Caco-2 (cell line): ENCODE measurements at regions of chr12 and their contacts with region 1.

Region 1: GRCh38 chr12:50074936-50075807 is 10.0 kb upstream of the SMARCD1 start:
- DNase-seq: peak; percentile 91 to 95
- H3K4me3 ChIP-seq: no peak overlapping the region
- H3K4me3 Mint-ChIP-seq: peak overlapping the region; percentile 36
- H3K27ac Mint-ChIP-seq: peak overlapping the region; percentile 66
- H3K4me1 ChIP-seq: peaks cover 20% of the 10 kb centered on the region
- H3K4me1 Mint-ChIP-seq: peaks cover 21% of the 10 kb centered on the region
- H3K27me3 ChIP-seq: no peaks in the 10 kb centered on the region
- H3K27me3 Mint-ChIP-seq: no peaks in the 10 kb centered on the region
- CTCF ChIP-seq: peak; percentile 95 to 97

Region 2: DNA sequence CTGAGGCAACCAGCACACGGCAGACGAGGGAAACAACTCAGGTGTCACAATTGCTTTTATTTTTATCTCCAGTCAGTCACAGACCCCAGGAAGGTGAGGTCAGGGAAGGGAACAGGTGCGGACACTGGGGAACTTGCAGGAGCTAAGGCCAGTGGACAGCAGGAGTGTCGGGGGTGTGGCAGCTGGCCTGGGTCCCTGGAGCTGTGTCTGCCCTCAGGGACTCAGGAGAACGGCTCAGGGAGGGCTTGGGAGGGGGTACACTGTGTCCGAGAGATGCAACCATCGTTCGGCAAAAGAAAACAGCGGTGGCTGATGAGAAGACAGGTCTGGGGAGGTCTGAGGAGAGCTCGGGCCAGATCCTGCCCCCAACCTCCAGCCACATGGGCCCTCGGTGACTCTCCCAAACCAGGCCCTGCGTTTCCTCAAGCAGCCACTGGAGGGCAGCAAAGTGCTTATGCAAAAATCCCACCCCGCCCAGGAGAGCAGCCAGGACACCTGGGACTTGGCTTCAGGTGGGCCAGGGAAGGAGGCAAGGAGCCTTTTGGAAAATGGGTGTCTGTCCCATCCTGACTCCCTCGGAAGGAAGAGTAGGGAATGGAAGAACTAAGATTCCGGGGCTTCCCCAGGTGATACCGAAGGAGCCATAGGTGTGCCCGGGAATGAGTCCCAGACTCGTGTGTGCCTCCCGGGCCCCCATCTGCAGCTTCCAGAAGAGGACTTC is 208.2 kb before region 1 on chr12:
- CTCF ChIA-PET with region 1: interaction called, 30 read pairs
- POLR2A ChIA-PET with region 1: interaction called, 3 read pairs
- intact Hi-C with region 1: loop called (anchors 1 kb)
- DNase-seq: peak; percentile 89 to 93
- H3K4me3 ChIP-seq: 0 out of 2 replicates have a peak overlapping the region, but pooled peaks have one; percentile 1
- H3K4me3 Mint-ChIP-seq: peak overlapping the region; percentile 60
- H3K27ac Mint-ChIP-seq: peak overlapping the region; percentile 90
- H3K4me1 ChIP-seq: peaks cover 53% of the 10 kb centered on the region
- H3K4me1 Mint-ChIP-seq: peaks cover 46% of the 10 kb centered on the region
- H3K27me3 ChIP-seq: no peaks in the 10 kb centered on the region
- H3K27me3 Mint-ChIP-seq: no peaks in the 10 kb centered on the region
- CTCF ChIP-seq: peak; percentile 98 to 99

Region 3: GRCh38 chr12:50025187-50026059 is 49.7 kb before region 1 on chr12 and contains the start of gene RACGAP1:
- CTCF ChIA-PET with region 1: interaction called, 12 read pairs
- POLR2A ChIA-PET with region 1: no interaction called
- intact Hi-C with region 1: no loop called
- DNase-seq: peak; percentile 99
- H3K4me3 ChIP-seq: peak within 1 kb of the TSS; percentile 70
- H3K4me3 Mint-ChIP-seq: peak within 1 kb of the TSS; percentile 86
- H3K27ac Mint-ChIP-seq: peak within 1 kb of the TSS; percentile 92
- H3K4me1 ChIP-seq: peaks cover 4% of the 10 kb centered on the region
- H3K4me1 Mint-ChIP-seq: peaks cover 21% of the 10 kb centered on the region
- H3K27me3 ChIP-seq: no peaks in the 10 kb centered on the region
- H3K27me3 Mint-ChIP-seq: no peaks in the 10 kb centered on the region
- CTCF ChIP-seq: no peak
- total RNA-seq, gene RACGAP1: 122 and 131 TPM in 2 replicates

Region 4: DNA sequence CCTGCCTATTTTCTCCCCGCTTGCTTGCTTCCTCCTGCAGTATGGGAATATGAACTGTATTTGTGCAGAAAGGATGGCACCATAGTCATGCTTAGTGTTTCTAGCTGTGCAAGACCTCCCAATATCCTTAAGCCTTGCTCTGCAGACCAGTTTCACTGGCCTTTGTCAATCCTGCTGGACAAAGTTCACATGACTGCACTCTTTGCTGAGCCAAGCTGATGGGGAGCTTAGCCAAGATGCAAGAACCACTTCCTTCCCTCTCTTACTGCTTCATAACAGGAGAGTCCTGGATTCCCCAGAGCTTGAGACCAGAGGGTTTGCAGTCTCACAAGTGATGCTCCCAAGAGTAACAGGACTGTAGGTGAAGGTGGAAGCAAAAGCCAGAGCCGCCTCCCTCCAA is 14.0 kb before region 1 on chr12:
- CTCF ChIA-PET with region 1: interaction called, 31 read pairs
- POLR2A ChIA-PET with region 1: no interaction called
- intact Hi-C with region 1: loop called (anchors 1 kb)
- DNase-seq: no peak
- H3K4me3 ChIP-seq: no peak overlapping the region
- H3K4me3 Mint-ChIP-seq: no peak overlapping the region
- H3K27ac Mint-ChIP-seq: no peak overlapping the region
- H3K4me1 ChIP-seq: peaks cover 8% of the 10 kb centered on the region
- H3K4me1 Mint-ChIP-seq: peaks cover 9% of the 10 kb centered on the region
- H3K27me3 ChIP-seq: no peaks in the 10 kb centered on the region
- H3K27me3 Mint-ChIP-seq: peaks cover 2% of the 10 kb centered on the region
- CTCF ChIP-seq: no peak

Region 5: GRCh38 chr12:50132505-50133135 is 57.4 kb after region 1 on chr12:
- CTCF ChIA-PET with region 1: interaction called, 3 read pairs
- POLR2A ChIA-PET with region 1: no interaction called
- intact Hi-C with region 1: loop called (anchors 1 kb)
- DNase-seq: peak in 1 of 2 experiments; percentile 67
- H3K4me3 ChIP-seq: no peak overlapping the region
- H3K4me3 Mint-ChIP-seq: no peak overlapping the region
- H3K27ac Mint-ChIP-seq: peak overlapping the region; percentile 31
- H3K4me1 ChIP-seq: no peaks in the 10 kb centered on the region
- H3K4me1 Mint-ChIP-seq: no peaks in the 10 kb centered on the region
- H3K27me3 ChIP-seq: no peaks in the 10 kb centered on the region
- H3K27me3 Mint-ChIP-seq: no peaks in the 10 kb centered on the region
- CTCF ChIP-seq: peak; percentile 73 to 77

Region 6: DNA sequence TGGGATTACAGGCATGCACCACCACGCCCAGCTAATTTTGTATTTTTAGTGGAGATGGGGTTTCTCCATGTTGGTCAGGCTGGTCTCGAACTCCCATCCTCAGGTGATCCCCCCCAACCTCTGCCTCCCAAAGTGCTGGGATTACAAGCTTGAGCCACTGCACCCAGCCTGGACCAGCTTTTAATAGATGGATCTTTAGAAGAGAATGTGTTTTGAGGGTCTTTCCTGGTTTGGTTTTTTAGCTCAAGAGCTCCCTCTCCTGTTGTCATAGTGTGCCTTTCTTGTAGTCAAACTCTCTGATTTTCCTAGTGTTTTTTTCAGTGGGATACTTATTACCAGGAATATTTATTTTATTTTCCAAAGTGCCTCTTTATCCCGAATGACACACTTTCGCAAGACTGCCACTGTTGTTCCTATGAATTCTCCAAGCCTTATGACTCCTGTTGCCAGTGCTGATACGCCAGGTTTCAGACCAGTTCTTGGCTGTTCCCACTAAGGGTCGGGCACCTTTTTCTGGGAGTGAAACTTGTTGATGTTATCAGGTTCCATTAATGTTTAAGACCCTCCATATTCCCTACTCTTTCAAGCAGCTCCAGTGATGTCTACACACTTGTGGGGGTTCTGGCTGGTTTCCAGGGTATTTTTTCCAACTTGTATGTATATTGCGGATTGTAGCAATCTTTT is 239.6 kb after region 1 on chr12:
- CTCF ChIA-PET with region 1: no interaction called
- POLR2A ChIA-PET with region 1: no interaction called
- intact Hi-C with region 1: loop called (anchors 1 kb)
- DNase-seq: peak in 1 of 2 experiments; percentile 56
- H3K4me3 ChIP-seq: no peak overlapping the region
- H3K4me3 Mint-ChIP-seq: no peak overlapping the region
- H3K27ac Mint-ChIP-seq: no peak overlapping the region
- H3K4me1 ChIP-seq: no peaks in the 10 kb centered on the region
- H3K4me1 Mint-ChIP-seq: no peaks in the 10 kb centered on the region
- H3K27me3 ChIP-seq: no peaks in the 10 kb centered on the region
- H3K27me3 Mint-ChIP-seq: no peaks in the 10 kb centered on the region
- CTCF ChIP-seq: peak; percentile 76 to 79